ENCODE measurements at regions of chr14 and their contacts with region 1.

Region 1: GRCh38 chr14:22570132-22570949 is 18.7 kb downstream of the DAD1 start:
- DNase-seq: peak; percentile 77
- H3K4me3 Mint-ChIP-seq: no peak overlapping the region
- H3K27ac Mint-ChIP-seq: peak overlapping the region; percentile 30
- H3K4me1 Mint-ChIP-seq: peaks cover 28% of the 10 kb centered on the region
- H3K27me3 Mint-ChIP-seq: no peaks in the 10 kb centered on the region
- CTCF ChIP-seq: peak; percentile 79

Region 2: DNA sequence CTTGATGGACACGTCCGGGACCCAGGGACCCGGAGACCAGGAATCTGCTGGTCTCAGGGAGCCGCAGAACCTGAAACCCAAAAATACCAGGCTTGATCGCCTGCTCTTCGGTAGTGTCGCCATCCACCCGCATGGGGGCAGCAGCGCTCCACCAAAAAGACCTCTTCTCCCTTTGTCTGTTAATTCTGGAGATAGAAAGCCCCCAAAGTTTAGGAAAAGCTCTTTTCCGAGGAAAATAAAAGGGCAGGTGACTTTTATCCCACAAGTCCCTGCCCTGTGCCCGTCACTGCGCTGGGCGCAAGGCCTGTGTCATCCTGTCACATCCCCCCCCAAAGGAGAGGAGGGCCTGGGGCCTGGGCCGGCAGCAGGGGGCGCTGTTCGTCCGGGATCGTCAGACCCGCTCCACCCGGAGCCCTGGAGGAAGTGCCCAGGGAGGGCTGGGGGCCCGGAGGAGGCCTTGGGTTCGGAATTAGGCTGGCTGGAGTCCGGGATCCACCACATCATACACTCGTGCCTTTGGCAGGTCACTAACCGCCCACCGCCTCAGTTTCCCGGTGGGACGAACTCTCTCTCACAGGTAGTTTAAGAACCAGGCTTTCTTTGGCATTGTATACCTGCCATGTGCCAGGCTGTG is 13.2 kb before region 1 on chr14:
- CTCF ChIA-PET with region 1: interaction called, 18 read pairs
- intact Hi-C with region 1: no loop called
- DNase-seq: peak; percentile 89
- H3K4me3 Mint-ChIP-seq: peak overlapping the region; percentile 24
- H3K27ac Mint-ChIP-seq: peak overlapping the region; percentile 96
- H3K4me1 Mint-ChIP-seq: peaks cover 63% of the 10 kb centered on the region
- H3K27me3 Mint-ChIP-seq: no peaks in the 10 kb centered on the region
- CTCF ChIP-seq: peak; percentile 94

Region 3: GRCh38 chr14:22644305-22644635 is 73.9 kb after region 1 on chr14 and contains the start of gene OR6J1:
- CTCF ChIA-PET with region 1: interaction called, 5 read pairs
- intact Hi-C with region 1: loop called (anchors 2 kb)
- DNase-seq: no peak
- H3K4me3 Mint-ChIP-seq: no peak within 1 kb of the TSS
- H3K27ac Mint-ChIP-seq: no peak within 1 kb of the TSS
- H3K4me1 Mint-ChIP-seq: peaks cover 48% of the 10 kb centered on the region
- H3K27me3 Mint-ChIP-seq: no peaks in the 10 kb centered on the region
- CTCF ChIP-seq: no peak
- total RNA-seq, gene OR6J1: not detected in 2 replicates

Region 4: GRCh38 chr14:22713631-22713950 is 143.2 kb after region 1 on chr14:
- CTCF ChIA-PET with region 1: interaction called, 4 read pairs
- intact Hi-C with region 1: loop called (anchors 5 kb)
- DNase-seq: no peak
- H3K4me3 Mint-ChIP-seq: peak overlapping the region; percentile 74
- H3K27ac Mint-ChIP-seq: peak overlapping the region; percentile 58
- H3K4me1 Mint-ChIP-seq: no peaks in the 10 kb centered on the region
- H3K27me3 Mint-ChIP-seq: peaks cover 33% of the 10 kb centered on the region
- CTCF ChIP-seq: no peak

Region 5: DNA sequence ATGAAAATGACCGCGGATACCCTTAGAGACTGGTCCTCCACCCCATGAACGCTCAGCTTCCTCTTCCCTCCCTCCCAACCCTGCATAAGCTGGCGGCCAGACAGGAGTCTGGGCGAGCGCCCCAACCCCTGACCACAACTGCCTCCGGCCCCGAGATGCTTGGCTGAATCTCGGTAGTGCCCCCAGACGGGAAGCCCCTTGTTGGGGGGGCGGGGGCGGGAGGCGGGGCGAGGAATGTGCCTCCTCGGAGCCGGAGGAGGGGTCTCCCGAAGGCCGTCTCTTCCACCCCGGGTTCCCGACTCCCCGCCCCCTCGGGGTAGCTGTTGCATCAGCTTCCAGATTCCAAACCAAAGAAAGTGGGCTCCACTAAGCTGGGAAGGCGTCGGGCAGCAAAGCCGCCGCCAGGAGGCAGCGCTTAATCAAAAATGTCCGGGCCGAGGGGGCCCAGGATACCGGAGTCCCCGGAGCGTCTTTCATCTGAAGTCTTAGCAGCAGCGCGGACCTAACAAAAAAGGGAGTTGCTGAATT is 252.3 kb after region 1 on chr14:
- CTCF ChIA-PET with region 1: interaction called, 14 read pairs
- intact Hi-C with region 1: no loop called
- DNase-seq: peak; percentile 87
- H3K4me3 Mint-ChIP-seq: peak overlapping the region; percentile 71
- H3K27ac Mint-ChIP-seq: peak overlapping the region; percentile 94
- H3K4me1 Mint-ChIP-seq: peaks cover 54% of the 10 kb centered on the region
- H3K27me3 Mint-ChIP-seq: no peaks in the 10 kb centered on the region
- CTCF ChIP-seq: peak; percentile 66